GM10248 (cell line): ENCODE measurements at regions of chr1 and their contacts with region 1.

Region 1: DNA sequence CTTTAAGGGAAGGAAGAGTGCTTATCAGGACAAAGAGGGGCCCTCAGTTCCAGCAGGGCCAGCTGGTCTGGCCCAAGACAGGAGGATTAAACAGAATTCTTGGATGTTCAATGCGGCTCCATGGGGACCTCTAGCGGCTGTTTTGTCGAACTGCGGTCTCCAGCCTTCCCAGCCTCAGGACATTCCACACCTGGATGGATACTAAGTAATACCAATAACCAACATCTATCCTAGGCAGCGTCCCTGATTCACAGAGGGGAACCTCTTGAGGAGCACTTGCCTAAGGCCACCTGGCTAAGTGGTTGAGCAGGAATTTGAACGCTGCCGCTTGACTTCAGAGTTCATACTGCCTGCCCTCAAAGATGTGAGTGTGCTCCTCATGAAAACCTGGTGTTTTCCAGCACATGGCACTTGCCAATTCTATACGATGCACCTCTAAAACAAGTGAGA is 15.5 kb upstream of the CD247 start:
- DNase-seq: peak; percentile 81
- CTCF ChIP-seq: peak; percentile 89

Region 2: GRCh38 chr1:167066333-167067122 is 467.3 kb before region 1 on chr1:
- CTCF ChIA-PET with region 1: interaction called, 11 read pairs
- POLR2A ChIA-PET with region 1: no interaction called
- DNase-seq: peak; percentile 90
- CTCF ChIP-seq: peak; percentile 94

Region 3: GRCh38 chr1:167401260-167401873 is 132.5 kb before region 1 on chr1:
- CTCF ChIA-PET with region 1: interaction called, 22 read pairs
- POLR2A ChIA-PET with region 1: no interaction called
- DNase-seq: peak; percentile 46
- CTCF ChIP-seq: peak; percentile 53

Region 4: DNA sequence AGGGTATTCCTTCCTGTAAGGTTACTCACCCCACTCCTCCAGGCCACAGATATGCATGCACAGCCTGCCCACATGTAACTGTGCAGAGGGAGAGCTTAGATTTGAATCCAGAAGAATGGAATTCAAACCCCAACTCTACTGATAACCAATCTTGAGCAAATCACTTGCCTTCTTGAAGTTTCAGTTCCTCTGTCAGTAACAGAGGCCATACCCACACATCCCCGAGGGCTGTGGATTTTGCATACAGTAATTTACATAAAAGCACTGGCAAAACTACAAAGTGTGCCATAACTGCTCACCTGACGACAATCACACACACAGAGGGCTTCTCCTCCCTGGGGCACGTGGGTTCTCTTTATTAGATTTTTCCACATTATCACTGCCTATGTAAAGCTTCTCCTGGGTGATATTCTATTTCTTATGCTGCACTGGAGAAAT is 34.2 kb before region 1 on chr1:
- CTCF ChIA-PET with region 1: interaction called, 20 read pairs
- POLR2A ChIA-PET with region 1: no interaction called
- DNase-seq: peak; percentile 79
- CTCF ChIP-seq: no peak

Region 5: GRCh38 chr1:167548059-167548932 is 14.4 kb after region 1 on chr1:
- CTCF ChIA-PET with region 1: interaction called, 19 read pairs
- POLR2A ChIA-PET with region 1: no interaction called
- DNase-seq: no peak
- CTCF ChIP-seq: no peak

Region 6: GRCh38 chr1:167563579-167564246 is 29.8 kb after region 1 on chr1:
- CTCF ChIA-PET with region 1: interaction called, 13 read pairs
- POLR2A ChIA-PET with region 1: no interaction called
- DNase-seq: no peak
- CTCF ChIP-seq: no peak